Adrenal gland (tissue), 19 donors: ENCODE measurements at regions of chr14 and their contacts with region 1.

Region 1: DNA sequence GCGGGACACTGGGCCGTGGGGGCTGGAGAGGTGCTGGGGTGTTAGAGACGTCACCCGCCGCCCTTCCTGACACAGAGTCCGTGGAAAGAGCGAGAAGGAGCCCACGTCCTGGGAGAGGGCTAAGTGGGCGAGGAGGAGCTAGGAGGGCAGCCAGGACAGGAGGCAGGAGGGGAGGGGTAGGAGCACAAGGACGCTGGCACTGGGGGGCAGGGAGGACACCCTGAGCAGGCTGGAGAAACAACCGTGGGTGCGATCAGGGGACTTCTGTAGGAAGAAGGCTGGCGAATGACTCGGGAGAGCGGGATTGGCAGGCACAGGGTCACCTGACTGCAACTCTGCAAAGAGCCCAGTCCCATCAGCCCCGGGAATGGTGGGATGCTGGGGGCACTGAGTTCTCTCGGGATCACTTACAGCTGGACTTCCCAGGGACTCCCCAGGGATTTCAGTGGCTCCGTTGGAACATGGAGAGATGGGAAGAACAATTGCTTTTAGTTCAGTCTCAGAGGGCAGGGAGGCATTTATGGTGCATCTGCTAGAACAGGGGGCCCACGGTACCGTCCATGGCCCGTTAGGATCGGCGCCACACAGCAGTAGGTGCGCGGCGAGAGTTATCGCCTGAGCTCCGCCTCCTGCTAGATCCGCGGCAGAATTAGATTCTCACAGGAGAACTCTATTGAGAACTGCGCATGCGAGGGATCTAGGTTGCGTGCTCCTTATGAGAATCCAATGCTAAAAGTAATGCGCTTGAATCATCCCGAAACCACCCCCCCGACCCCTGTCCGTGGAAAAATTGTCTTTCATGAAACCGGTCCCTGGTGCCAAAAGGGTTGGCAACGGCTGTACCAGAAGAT is 24.3 kb downstream of the UBR7 start:
- DNase-seq: peak in 6 of 7 donors; percentile 22 to 54 (median 31)
- H3K4me3 ChIP-seq: peak overlapping the region in 1 of 4 donors; percentile 40
- H3K27ac ChIP-seq: no peak overlapping the region
- H3K4me1 ChIP-seq: no peaks in the 10 kb centered on the region
- H3K27me3 ChIP-seq: no peaks in the 10 kb centered on the region
- CTCF ChIP-seq: no peak
- POLR2A ChIP-seq: no peak

Region 2: DNA sequence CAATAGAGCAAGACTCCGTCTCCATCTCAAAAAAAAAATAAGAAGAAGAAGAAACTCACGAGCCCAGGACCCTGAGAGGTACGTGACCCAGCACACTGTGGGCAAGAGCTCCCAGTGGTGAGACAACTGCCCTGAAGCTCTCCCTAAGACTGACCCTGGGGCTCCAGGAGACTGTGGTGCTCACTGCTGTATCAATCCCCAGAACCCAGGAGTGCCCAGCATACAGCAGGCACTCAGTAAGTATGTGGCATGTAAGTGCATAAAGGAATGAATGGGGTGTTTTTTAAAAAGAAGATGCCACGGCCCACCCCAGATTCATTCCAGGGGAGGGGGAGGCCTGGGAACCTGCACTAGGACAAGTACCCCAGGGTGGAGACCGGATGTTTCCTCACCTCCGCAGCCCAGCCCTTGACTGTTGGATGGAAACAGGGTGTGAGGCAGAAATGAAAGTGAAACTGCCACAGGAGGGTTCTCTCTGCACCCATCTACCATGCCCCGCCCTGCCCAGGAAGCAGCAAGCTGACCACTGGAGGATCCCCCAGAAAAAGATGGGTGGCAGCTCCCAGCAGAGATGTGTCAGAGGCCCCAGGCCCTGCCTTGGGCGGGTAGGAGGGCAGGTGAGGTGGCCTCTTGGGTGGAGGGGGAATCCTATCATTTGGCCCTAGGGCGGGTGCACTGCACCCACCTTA is 127.8 kb before region 1 on chr14:
- intact Hi-C with region 1: no loop called
- DNase-seq: peak in 3 of 7 donors; percentile 26 to 60 (median 33)
- H3K4me3 ChIP-seq: no peak overlapping the region
- H3K27ac ChIP-seq: peak overlapping the region in 1 of 5 donors; percentile 3
- H3K4me1 ChIP-seq: peaks cover 0 to 30% of the 10 kb centered on the region in 2 donors
- H3K27me3 ChIP-seq: no peaks in the 10 kb centered on the region
- CTCF ChIP-seq: no peak
- POLR2A ChIP-seq: no peak

Region 3: DNA sequence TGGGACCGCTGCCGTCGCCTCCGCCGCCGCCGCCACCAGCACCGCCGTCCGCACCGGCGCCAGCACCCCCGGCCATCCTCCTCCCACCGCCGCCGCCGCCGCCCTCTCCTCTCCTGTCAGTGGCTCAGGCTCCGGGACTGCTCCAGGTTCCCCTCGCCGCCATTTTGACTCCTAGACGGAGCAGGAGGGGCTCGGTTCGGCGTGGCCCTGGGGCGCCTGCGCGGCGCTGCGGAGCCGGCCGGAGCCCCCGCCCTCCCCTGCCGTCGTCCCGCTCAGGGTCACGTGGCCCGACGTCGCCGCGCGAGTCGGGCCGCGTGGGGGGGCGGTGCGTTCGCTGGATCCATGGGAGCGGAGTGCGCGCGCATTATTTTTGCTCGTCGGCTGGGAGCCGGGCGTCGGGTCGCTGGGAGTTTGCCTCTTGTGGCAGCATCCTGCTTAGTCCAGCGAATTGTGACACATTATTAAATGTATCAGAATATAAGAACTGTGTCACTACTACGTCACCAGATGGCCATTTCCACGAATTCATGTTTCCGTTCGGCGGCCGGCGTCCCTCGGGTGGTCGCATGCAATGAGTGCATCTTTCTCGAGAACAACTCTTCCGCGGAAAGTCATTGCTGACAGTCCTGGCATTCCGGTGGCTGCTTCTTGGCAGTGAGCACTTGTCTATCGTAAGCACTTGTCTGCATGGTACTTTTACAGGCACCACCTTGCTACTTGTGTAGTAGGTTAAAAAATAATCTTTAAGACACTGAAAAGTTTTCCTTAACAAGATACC is 101.7 kb after region 1 on chr14 and contains the start of gene BTBD7:
- intact Hi-C with region 1: loop called in 1 of 2 experiments (anchors 10 kb)
- DNase-seq: peak; percentile 94 to 97 (median 97)
- H3K4me3 ChIP-seq: peak within 1 kb of the TSS; percentile 67 to 94 (median 88)
- H3K27ac ChIP-seq: peak within 1 kb of the TSS; percentile 73 to 99 (median 96)
- H3K4me1 ChIP-seq: peaks cover 9 to 28% of the 10 kb centered on the region in 2 donors
- H3K27me3 ChIP-seq: no peaks in the 10 kb centered on the region
- CTCF ChIP-seq: peak in 5 of 6 experiments; percentile 30 to 61 (median 37)
- POLR2A ChIP-seq: peak; percentile 2 to 81
- total RNA-seq, gene BTBD7: 12.9 to 41.0 (median 20.4) TPM

Region 4: DNA sequence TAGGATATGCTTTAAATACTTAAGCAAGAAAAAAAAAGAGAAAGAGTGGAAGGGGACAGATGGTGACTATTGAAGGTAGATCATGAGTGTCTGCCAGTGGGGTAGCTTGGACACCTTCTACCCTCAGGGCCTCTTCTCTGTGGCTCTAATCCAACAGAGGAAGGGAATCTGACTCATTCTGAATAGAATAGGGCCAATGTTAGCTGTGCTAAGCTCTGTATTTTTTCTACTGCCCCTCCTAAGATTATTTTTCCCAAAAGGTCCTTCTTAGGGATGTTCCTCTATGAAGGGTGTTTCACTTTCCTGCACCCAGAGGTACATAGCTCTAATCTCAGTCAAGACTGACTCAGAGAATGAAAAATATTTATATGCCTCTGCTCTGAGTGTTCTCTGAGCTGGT is 225.0 kb after region 1 on chr14:
- intact Hi-C with region 1: no loop called
- DNase-seq: no peak
- H3K4me3 ChIP-seq: no peak overlapping the region
- H3K27ac ChIP-seq: no peak overlapping the region
- H3K4me1 ChIP-seq: no peaks in the 10 kb centered on the region
- H3K27me3 ChIP-seq: no peaks in the 10 kb centered on the region
- CTCF ChIP-seq: no peak
- POLR2A ChIP-seq: no peak

Region 5: GRCh38 chr14:93543766-93544165 is 312.4 kb after region 1 on chr14:
- intact Hi-C with region 1: loop called (anchors 10 kb)
- DNase-seq: no peak
- H3K4me3 ChIP-seq: no peak overlapping the region
- H3K27ac ChIP-seq: no peak overlapping the region
- H3K4me1 ChIP-seq: no peaks in the 10 kb centered on the region
- H3K27me3 ChIP-seq: no peaks in the 10 kb centered on the region
- CTCF ChIP-seq: peak; percentile 18 to 55 (median 40)
- POLR2A ChIP-seq: no peak